PC-9 (cell line): ENCODE measurements at regions of chr6 and their contacts with region 1.

Region 1: GRCh38 chr6:53103992-53104675 is 38.9 kb downstream of the FBXO9 start:
- DNase-seq: peak; percentile 21 to 42
- H3K4me3 ChIP-seq: no peak overlapping the region
- H3K27ac ChIP-seq: no peak overlapping the region
- H3K4me1 ChIP-seq: peaks cover 12% of the 10 kb centered on the region
- H3K27me3 ChIP-seq: no peaks in the 10 kb centered on the region
- CTCF ChIP-seq: peak; percentile 69

Region 2: GRCh38 chr6:53042112-53042511 is 62.0 kb before region 1 on chr6:
- CTCF ChIA-PET with region 1: no interaction called
- POLR2A ChIA-PET with region 1: no interaction called
- intact Hi-C with region 1: no loop called
- DNase-seq: peak in 1 of 2 experiments; percentile 66
- H3K4me3 ChIP-seq: no peak overlapping the region
- H3K27ac ChIP-seq: 0 out of 2 replicates have a peak overlapping the region, but pooled peaks have one; percentile 2
- H3K4me1 ChIP-seq: peaks cover 17% of the 10 kb centered on the region
- H3K27me3 ChIP-seq: no peaks in the 10 kb centered on the region
- CTCF ChIP-seq: no peak

Region 3: DNA sequence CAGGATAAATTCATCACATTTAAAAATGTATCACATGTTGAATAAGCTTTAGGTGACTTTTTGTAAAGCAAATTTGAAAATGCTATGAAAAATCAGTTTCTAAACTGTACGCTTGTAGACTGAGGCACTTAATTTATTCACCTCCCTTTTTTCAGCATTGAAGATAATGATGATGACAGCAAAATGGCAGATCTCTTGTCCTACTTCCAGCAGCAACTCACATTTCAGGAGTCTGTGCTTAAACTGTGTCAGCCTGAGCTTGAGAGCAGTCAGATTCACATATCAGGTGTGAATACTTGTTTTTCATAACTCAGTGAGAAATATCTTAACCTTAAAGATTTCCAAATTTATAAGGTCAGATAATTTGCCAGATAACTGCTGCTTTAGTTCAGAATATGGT is 23.3 kb before region 1 on chr6:
- CTCF ChIA-PET with region 1: interaction called, 15 read pairs
- POLR2A ChIA-PET with region 1: no interaction called
- intact Hi-C with region 1: no loop called
- DNase-seq: no peak
- H3K4me3 ChIP-seq: no peak overlapping the region
- H3K27ac ChIP-seq: no peak overlapping the region
- H3K4me1 ChIP-seq: no peaks in the 10 kb centered on the region
- H3K27me3 ChIP-seq: no peaks in the 10 kb centered on the region
- CTCF ChIP-seq: no peak

Region 4: GRCh38 chr6:53134601-53135235 is 30.6 kb after region 1 on chr6:
- CTCF ChIA-PET with region 1: no interaction called
- POLR2A ChIA-PET with region 1: no interaction called
- intact Hi-C with region 1: no loop called
- DNase-seq: no peak
- H3K4me3 ChIP-seq: no peak overlapping the region
- H3K27ac ChIP-seq: no peak overlapping the region
- H3K4me1 ChIP-seq: no peaks in the 10 kb centered on the region
- H3K27me3 ChIP-seq: no peaks in the 10 kb centered on the region
- CTCF ChIP-seq: no peak

Region 5: GRCh38 chr6:53144802-53145201 is 40.7 kb after region 1 on chr6:
- CTCF ChIA-PET with region 1: no interaction called
- POLR2A ChIA-PET with region 1: no interaction called
- intact Hi-C with region 1: no loop called
- DNase-seq: no peak
- H3K4me3 ChIP-seq: no peak overlapping the region
- H3K27ac ChIP-seq: no peak overlapping the region
- H3K4me1 ChIP-seq: no peaks in the 10 kb centered on the region
- H3K27me3 ChIP-seq: no peaks in the 10 kb centered on the region
- CTCF ChIP-seq: no peak

Region 6: GRCh38 chr6:53484476-53485280 is 380.5 kb after region 1 on chr6:
- CTCF ChIA-PET with region 1: interaction called, 3 read pairs
- POLR2A ChIA-PET with region 1: no interaction called
- intact Hi-C with region 1: loop called (anchors 1 kb)
- DNase-seq: peak in 1 of 2 experiments; percentile 42
- H3K4me3 ChIP-seq: no peak overlapping the region
- H3K27ac ChIP-seq: no peak overlapping the region
- H3K4me1 ChIP-seq: no peaks in the 10 kb centered on the region
- H3K27me3 ChIP-seq: no peaks in the 10 kb centered on the region
- CTCF ChIP-seq: peak; percentile 98